Ascending aorta (tissue), 2 donors: ENCODE measurements at regions of chr7 and their contacts with region 1.

Region 1: GRCh38 chr7:151017953-151018420 is 6.3 kb downstream of the ATG9B start:
- DNase-seq: peak in 1 of 2 donors; percentile 79
- H3K4me3 ChIP-seq: peak overlapping the region; percentile 35 to 52
- H3K27ac ChIP-seq: no peak overlapping the region
- H3K4me1 ChIP-seq: peaks cover 12 to 15% of the 10 kb centered on the region in 2 donors
- H3K27me3 ChIP-seq: peaks cover 18% of the 10 kb centered on the region
- CTCF ChIP-seq: peak; percentile 70 to 92 (median 90)

Region 2: DNA sequence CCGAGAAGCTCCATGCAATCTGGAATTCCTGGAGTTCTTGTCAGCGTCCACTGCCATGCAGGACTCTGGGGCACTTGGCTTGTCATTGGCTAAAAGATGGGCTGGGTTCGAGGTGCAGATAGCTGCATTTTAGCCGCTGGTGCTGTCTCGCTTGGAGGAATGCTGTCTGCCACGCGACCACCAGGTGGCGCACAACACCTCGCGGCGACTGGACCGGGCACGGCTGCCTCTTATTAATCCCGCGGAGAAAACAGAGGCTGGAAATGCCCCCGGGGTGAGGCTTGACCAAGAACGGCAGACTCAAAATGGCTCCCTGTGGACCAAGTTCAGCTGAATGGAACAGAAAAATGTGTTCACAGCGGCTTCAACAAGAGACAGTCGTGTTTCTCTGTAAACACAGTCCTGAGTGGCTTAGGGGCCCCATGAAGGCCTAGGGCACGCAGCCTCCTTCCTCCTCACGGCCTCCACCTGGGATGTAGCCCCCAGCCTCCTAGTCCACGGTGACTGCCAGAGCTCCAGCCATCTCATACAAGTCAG is 119.4 kb before region 1 on chr7:
- intact Hi-C with region 1: loop called (anchors 1 kb)
- DNase-seq: peak in 1 of 2 donors; percentile 85
- H3K4me3 ChIP-seq: no peak overlapping the region
- H3K27ac ChIP-seq: no peak overlapping the region
- H3K4me1 ChIP-seq: no peaks in the 10 kb centered on the region
- H3K27me3 ChIP-seq: no peaks in the 10 kb centered on the region
- CTCF ChIP-seq: peak; percentile 71 to 97 (median 91)

Region 3: GRCh38 chr7:150962553-150963399 is 55.2 kb before region 1 on chr7:
- intact Hi-C with region 1: loop called (anchors 5 kb)
- DNase-seq: no peak
- H3K4me3 ChIP-seq: no peak overlapping the region
- H3K27ac ChIP-seq: no peak overlapping the region
- H3K4me1 ChIP-seq: no peaks in the 10 kb centered on the region
- H3K27me3 ChIP-seq: no peaks in the 10 kb centered on the region
- CTCF ChIP-seq: peak; percentile 57 to 79 (median 68)